MCF 10A (cell line): ENCODE measurements at regions of chr16 and their contacts with region 1.

Region 1: DNA sequence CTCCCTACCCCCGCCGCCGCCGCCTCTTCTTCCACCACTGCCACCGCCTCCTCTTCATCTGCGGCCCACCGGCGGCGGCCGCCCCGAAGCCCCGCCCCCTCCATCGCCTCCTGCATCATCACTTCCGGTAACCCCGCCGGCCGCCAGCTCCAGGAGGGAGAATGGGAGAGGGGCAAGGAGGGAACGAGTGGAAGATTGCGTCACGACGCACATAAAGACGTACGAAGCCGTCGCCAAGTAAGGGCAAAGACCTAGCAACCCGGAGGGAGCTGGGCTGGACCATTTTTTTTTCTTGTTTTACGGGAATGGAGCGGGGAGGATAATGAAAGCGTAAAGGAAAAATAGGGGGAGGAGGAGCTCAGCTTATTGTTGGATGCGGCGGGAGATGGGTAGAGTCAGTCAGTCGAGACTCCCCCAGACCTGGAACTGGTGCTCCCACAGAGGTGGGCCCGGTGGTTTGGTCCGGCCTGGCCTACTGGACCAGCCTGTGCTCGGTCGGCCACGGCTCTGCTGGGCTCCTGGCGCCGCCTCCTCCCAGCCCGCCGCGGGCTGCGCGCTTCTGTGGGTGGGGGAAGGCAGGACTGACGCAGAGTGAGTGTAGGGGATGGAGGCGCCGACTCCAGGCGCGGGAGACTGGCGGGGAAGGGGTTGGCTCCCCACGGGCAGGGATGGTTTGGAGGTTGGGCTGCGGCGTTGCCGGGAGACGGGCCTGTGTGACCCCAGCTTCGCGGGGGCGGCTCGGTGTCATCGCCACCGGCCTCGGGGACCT is at the starts of genes DCUN1D3 and LYRM1:
- DNase-seq: peak; percentile 99
- H3K4me3 Mint-ChIP-seq: peak within 1 kb of the TSS; percentile 75
- H3K27ac Mint-ChIP-seq: peak within 1 kb of the TSS; percentile 97
- H3K4me1 Mint-ChIP-seq: peaks cover 63% of the 10 kb centered on the region
- H3K27me3 Mint-ChIP-seq: no peaks in the 10 kb centered on the region
- CTCF ChIP-seq: no peak
- total RNA-seq, gene DCUN1D3: 31.0 and 31.7 TPM in 2 replicates
- total RNA-seq, gene LYRM1: 67.3 and 92.8 TPM in 2 replicates

Region 2: GRCh38 chr16:20806168-20807050 is 94.1 kb before region 1 on chr16 and contains the starts of genes ERI2 and REXO5:
- CTCF ChIA-PET with region 1: interaction called, 5 read pairs
- POLR2A ChIA-PET with region 1: interaction called, 33 read pairs
- intact Hi-C with region 1: loop called (anchors 2 kb)
- DNase-seq: peak; percentile 95
- H3K4me3 Mint-ChIP-seq: peak within 1 kb of the TSS; percentile 97
- H3K27ac Mint-ChIP-seq: peak within 1 kb of the TSS; percentile 93
- H3K4me1 Mint-ChIP-seq: peaks cover 6% of the 10 kb centered on the region
- H3K27me3 Mint-ChIP-seq: no peaks in the 10 kb centered on the region
- CTCF ChIP-seq: peak; percentile 44
- total RNA-seq, gene ERI2: 26.8 and 28.4 TPM in 2 replicates
- total RNA-seq, gene REXO5: 3.8 and 6.1 TPM in 2 replicates

Region 3: DNA sequence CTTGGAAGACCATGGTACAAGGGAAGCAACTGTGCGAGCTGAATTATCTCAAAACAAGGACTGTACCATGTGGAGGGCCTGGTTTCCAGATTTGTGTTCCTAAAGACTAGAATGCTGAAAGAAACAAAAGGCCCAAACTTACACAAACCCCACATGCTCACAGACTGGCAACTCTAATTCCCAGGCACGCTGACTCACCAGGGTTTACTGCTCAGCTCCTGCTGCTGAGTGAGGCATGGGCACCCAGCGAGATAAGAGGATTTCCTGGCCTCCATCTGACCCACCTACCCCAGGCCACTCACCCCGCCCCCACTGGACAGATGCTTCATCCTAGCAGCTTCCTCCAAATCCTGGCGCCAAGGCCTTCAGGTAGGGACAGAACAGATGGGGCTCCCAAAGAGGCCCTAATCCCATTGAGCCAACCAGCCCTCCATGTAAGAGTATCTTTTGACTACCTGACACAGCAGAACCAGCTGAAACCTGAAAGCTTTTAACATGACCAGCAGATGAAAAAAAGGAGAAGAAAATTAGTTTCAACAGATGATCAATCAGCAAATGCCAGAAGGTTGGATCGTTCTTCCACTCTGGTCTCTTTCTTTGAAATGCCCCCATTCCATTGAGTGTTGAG is 34.2 kb before region 1 on chr16:
- CTCF ChIA-PET with region 1: interaction called, 31 read pairs
- POLR2A ChIA-PET with region 1: interaction called, 343 read pairs
- intact Hi-C with region 1: no loop called
- DNase-seq: peak; percentile 91
- H3K4me3 Mint-ChIP-seq: peak overlapping the region; percentile 64
- H3K27ac Mint-ChIP-seq: peak overlapping the region; percentile 99
- H3K4me1 Mint-ChIP-seq: peaks cover 63% of the 10 kb centered on the region
- H3K27me3 Mint-ChIP-seq: no peaks in the 10 kb centered on the region
- CTCF ChIP-seq: no peak

Region 4: GRCh38 chr16:20879175-20880040 is 21.1 kb before region 1 on chr16:
- CTCF ChIA-PET with region 1: interaction called, 6 read pairs
- POLR2A ChIA-PET with region 1: interaction called, 343 read pairs
- intact Hi-C with region 1: no loop called
- DNase-seq: peak; percentile 34
- H3K4me3 Mint-ChIP-seq: peak overlapping the region; percentile 35
- H3K27ac Mint-ChIP-seq: peak overlapping the region; percentile 75
- H3K4me1 Mint-ChIP-seq: peaks cover 50% of the 10 kb centered on the region
- H3K27me3 Mint-ChIP-seq: no peaks in the 10 kb centered on the region
- CTCF ChIP-seq: no peak

Region 5: GRCh38 chr16:20887207-20887606 is 13.3 kb before region 1 on chr16:
- CTCF ChIA-PET with region 1: interaction called, 4 read pairs
- POLR2A ChIA-PET with region 1: interaction called, 29 read pairs
- intact Hi-C with region 1: no loop called
- DNase-seq: no peak
- H3K4me3 Mint-ChIP-seq: no peak overlapping the region
- H3K27ac Mint-ChIP-seq: peak overlapping the region; percentile 65
- H3K4me1 Mint-ChIP-seq: peaks cover 29% of the 10 kb centered on the region
- H3K27me3 Mint-ChIP-seq: no peaks in the 10 kb centered on the region
- CTCF ChIP-seq: no peak

Region 6: GRCh38 chr16:20910781-20911321 is 10.4 kb after region 1 on chr16:
- CTCF ChIA-PET with region 1: interaction called, 4 read pairs
- POLR2A ChIA-PET with region 1: interaction called, 76 read pairs
- intact Hi-C with region 1: no loop called
- DNase-seq: peak; percentile 89
- H3K4me3 Mint-ChIP-seq: peak overlapping the region; percentile 47
- H3K27ac Mint-ChIP-seq: peak overlapping the region; percentile 97
- H3K4me1 Mint-ChIP-seq: peaks cover 41% of the 10 kb centered on the region
- H3K27me3 Mint-ChIP-seq: no peaks in the 10 kb centered on the region
- CTCF ChIP-seq: no peak

Region 7: GRCh38 chr16:21083729-21084268 is 183.3 kb after region 1 on chr16:
- CTCF ChIA-PET with region 1: interaction called, 7 read pairs
- POLR2A ChIA-PET with region 1: no interaction called
- intact Hi-C with region 1: loop called (anchors 5 kb)
- DNase-seq: peak; percentile 70
- H3K4me3 Mint-ChIP-seq: no peak overlapping the region
- H3K27ac Mint-ChIP-seq: no peak overlapping the region
- H3K4me1 Mint-ChIP-seq: peaks cover 6% of the 10 kb centered on the region
- H3K27me3 Mint-ChIP-seq: no peaks in the 10 kb centered on the region
- CTCF ChIP-seq: peak; percentile 76